SK-N-SH (cell line): ENCODE measurements at regions of chr2 and their contacts with region 1.

Region 1: DNA sequence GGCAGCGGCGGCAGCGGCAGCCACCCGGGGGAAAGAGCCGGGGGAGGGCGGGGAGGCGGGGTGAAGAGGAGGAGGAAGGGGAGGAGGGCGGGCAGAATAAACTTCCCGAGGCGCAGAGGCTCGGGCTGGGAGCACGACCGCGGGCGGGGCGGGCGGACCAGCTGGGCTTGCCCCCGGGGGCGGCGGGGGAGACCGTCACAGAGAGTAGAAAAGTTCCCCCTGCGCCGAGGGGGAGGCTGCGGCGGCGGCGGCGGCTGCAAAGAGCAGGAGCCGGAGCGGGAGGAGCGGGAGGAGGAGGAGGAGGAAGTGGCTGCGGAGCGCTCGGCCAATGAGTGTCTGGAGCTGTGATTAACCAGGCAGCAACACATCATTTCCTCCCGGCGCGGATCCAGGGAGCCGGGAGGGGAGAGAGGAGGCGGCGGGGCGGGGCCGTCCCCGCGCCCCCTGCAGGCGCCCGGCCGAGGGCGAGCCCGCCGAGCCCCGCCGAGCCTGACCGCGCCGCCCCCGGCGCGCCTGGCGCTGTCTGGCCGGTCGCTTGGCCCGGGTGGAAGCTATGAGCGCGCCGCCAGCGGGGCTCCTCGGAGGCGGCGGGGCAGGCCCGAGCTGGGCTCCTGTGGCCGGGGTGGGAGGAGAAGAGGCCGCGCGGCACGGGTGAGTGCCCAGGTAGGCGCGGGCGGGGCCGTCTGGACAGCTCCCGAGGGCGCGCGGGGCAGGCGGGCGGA is at the start of gene ACVR1:
- DNase-seq: peak; percentile 95
- H3K4me3 ChIP-seq: peak within 1 kb of the TSS; percentile 74 to 88
- H3K27ac ChIP-seq: peak within 1 kb of the TSS; percentile 86 to 87
- H3K4me1 ChIP-seq: peaks cover 8 to 23% of the 10 kb centered on the region in 2 experiments; a peak in 3 of 4 replicates
- H3K27me3 ChIP-seq: no peaks in the 10 kb centered on the region
- CTCF ChIP-seq: 0 out of 2 replicates have a peak, but pooled peaks have one; percentile 19
- EP300 ChIP-seq: peak in 1 of 2 experiments; percentile 31; a peak in 1 of 4 replicates
- RAD21 ChIP-seq: peak; percentile 9; the same call in 1 of the 2 replicates
- polyA plus RNA-seq, gene ACVR1: 21.0 and 22.4 TPM in 2 replicates

Region 2: DNA sequence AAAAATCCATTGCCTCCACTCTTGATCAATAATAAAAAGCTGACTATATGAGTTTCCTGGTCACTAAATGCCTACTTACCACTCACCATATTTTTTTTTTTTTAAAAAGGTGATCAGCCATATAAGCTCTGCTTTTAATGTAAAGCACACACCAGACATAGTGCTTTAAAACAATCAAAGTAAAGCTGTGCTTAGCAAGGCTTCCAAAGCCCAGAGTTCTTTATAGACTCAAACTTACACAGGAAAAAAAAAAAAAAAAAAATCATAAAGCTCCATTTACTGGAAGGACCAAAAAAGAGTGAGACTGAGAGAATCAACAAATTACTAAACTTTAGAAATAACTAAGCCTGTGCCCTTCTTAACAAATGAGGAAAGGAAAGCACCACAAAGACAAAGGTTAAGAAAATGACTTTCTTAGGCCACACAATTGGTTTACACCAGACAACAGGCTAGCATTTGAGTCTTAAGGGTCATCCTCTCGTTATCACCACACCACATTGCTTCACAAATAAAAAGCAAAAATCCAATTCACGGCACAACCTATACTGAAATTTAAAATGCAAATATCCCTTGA is 11.3 kb before region 1 on chr2:
- CTCF ChIA-PET with region 1: interaction called, 6 read pairs
- POLR2A ChIA-PET with region 1: interaction called, 10 read pairs
- DNase-seq: no peak
- H3K4me3 ChIP-seq: no peak overlapping the region
- H3K27ac ChIP-seq: no peak overlapping the region
- H3K4me1 ChIP-seq: peaks cover 7 to 11% of the 10 kb centered on the region in 2 experiments; a peak in 2 of 4 replicates
- H3K27me3 ChIP-seq: no peaks in the 10 kb centered on the region
- CTCF ChIP-seq: no peak
- EP300 ChIP-seq: no peak
- RAD21 ChIP-seq: no peak